Calu3 (cell line): ENCODE measurements at regions of chr6 and their contacts with region 1.

Region 1: DNA sequence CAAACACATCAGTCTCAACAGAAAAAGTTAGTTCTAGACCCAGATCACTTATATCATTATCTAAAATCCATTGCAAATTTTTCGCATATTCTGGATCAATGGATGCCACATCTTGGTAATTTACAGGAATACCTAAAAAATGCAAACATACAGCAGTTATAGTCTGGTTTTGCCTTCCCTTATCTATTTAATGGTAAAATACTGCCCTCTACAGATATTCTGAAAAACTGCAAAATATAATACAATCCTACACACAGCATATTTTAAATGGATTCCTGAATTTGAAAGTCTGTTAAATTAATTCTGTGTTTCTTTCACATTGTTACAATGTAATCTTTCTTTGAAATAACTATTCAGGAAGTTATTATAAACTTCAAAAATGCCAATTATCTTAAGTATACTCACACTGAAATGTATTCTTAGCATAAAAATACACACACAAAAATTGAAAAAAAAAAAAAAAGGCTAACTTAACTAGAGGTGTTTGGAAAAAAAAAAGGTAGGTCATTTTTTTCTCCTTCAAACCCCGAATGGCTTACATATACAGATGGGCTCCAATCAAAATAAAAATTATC is 88.4 kb downstream of the HACE1 start:
- DNase-seq: no peak
- H3K4me3 Mint-ChIP-seq: no peak overlapping the region
- H3K27ac Mint-ChIP-seq: no peak overlapping the region
- H3K4me1 Mint-ChIP-seq: no peaks in the 10 kb centered on the region
- H3K27me3 Mint-ChIP-seq: no peaks in the 10 kb centered on the region
- CTCF ChIP-seq: peak; percentile 24

Region 2: DNA sequence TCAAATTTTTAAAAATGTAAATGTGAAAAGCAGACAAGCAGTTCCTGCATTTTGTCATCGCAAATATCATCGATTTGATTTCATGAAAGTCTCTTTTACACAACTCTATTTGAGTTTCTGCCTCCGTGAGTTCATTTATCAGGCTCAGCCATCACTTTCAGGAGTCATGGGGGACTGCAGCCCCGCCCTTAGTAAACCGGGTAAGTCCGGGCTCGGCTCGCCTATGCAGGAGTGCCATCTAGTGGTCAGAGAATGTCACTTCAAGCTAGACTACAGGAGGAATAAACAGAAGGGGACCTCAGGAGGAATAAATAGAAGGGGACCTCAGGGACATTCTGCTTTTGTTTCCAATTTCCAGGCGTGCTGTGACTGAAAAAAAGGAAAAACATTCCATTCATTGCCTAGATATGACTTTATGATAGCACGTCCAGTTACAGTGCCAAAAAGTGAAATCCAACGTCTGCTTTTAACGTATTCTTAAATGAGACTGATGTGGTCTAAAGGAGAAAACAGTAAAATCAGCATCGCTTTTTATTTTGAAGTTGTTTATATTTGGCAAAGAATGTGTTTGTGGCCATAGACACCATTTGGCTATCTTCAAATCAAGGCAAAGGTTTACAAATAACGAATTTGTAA is 245.6 kb before region 1 on chr6:
- CTCF ChIA-PET with region 1: interaction called, 3 read pairs
- intact Hi-C with region 1: loop called (anchors 1 kb)
- DNase-seq: peak; percentile 76
- H3K4me3 Mint-ChIP-seq: peak overlapping the region; percentile 66
- H3K27ac Mint-ChIP-seq: peak overlapping the region; percentile 24
- H3K4me1 Mint-ChIP-seq: peaks cover 26% of the 10 kb centered on the region
- H3K27me3 Mint-ChIP-seq: no peaks in the 10 kb centered on the region
- CTCF ChIP-seq: peak; percentile 73

Region 3: DNA sequence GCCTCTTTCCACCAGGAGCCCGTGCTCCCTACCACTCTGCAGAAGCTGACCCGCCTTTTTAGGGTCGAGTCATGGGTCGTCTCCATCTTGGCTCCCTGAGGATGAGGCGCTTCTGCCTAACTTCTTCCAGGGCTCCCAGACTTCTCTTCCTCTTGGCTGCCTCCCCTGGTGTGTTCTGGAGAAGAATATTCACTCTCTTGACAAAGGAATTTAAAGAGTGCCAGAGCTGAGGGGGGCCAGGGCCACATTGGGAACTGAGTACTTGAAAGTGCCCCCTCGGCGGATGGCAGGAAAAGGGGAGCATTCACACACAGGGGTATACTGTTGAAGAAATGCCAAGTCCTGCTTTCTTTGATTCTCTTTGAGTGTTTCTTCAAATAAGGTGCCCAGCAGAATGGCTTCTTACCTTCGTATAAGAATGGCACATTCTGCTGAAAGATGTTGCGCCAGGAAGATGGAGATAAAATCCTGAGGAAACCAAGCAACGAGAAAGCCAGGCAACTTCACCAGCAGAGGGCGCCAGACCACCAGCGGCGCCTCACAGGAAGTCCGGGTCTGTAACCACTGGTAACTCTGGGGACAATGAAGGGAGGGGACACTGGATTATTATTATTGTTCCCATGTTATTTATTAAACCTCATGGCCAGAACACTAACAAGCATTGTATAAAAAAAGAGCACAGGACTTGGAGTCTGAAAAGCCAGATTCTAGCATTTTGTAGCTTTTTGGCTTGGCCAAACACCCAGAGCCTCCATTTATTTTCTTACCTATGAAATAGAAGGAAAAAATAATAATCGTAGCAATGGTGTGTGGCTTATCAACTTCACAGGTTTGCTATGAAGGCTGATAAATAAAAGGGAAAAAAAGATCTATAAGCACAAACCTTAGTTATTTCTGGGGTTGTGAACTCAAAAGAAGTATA is 88.4 kb before region 1 on chr6:
- CTCF ChIA-PET with region 1: no interaction called
- intact Hi-C with region 1: loop called (anchors 5 kb)
- DNase-seq: peak; percentile 57
- H3K4me3 Mint-ChIP-seq: no peak overlapping the region
- H3K27ac Mint-ChIP-seq: no peak overlapping the region
- H3K4me1 Mint-ChIP-seq: no peaks in the 10 kb centered on the region
- H3K27me3 Mint-ChIP-seq: no peaks in the 10 kb centered on the region
- CTCF ChIP-seq: peak; percentile 62

Region 4: DNA sequence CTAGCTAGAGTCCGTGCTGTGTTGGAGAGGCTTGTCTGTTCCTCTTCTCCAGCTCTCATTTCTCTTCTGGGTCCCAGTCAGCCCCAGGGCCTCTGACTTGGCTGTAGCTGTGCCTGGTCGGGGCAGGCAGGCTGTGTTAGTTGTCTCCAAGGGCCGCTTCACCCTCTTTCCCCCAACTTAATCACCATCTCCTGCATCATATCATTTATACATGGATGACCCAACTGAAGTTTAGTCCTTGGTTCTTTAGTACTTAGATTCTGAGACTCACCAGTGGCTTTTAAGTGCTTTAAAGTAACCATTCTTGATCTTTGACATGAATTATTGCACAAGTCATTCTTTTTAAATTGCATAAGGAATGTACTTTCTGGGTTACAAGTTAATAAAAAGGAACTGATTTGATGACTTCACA is 1730.6 kb after region 1 on chr6:
- CTCF ChIA-PET with region 1: no interaction called
- intact Hi-C with region 1: no loop called
- DNase-seq: no peak
- H3K4me3 Mint-ChIP-seq: no peak overlapping the region
- H3K27ac Mint-ChIP-seq: no peak overlapping the region
- H3K4me1 Mint-ChIP-seq: peaks cover 18% of the 10 kb centered on the region
- H3K27me3 Mint-ChIP-seq: no peaks in the 10 kb centered on the region
- CTCF ChIP-seq: no peak